ENCODE measurements at regions of chr2 and their contacts with region 1.

Region 1: DNA sequence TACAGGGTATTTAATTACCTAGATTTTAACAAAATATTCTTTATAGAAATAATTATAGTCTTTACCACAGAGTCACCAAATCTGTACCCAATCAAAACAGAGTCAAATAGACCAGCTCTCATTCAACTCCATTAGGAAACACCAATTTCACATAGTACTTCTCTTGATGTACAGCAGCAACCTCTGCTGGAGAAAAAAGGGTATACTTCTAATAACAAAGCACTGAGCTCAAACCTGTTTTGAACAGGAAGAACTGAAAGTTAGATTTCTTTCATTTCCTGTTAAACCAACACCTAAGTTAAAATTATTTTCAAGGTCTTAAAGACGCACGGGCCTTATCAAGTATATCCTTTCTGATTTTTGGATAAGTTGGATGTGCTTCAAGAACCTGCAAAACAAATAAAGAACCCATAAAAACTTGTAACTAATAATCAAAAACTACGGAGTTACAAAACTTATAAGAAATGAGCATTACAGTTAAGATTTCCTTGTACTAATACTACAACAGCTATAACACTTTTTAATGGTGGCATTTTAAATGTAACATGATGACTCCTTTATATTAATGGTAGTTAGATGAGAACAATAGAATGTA is 79.0 kb downstream of the TTC21B start:
- DNase-seq: peak; percentile 58
- CTCF ChIP-seq: peak; percentile 48

Region 2: DNA sequence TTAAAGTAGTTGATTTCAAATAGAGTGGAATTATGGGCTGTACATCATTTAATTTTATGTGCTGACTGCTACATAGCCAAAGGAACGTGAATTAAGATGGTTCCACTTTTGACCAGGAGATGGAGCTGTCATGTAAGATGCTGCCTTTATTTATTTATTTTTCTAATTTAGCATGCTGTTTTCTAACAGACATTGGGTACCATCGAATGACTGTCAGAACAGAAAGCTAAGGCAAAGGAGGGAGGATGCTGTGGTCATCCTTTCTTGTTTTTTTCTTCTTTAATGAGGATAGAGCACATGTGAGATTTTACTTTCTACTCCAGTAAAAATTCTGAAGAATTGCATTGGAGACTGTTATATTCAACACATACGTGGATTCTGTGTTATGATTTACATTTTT is 635.3 kb before region 1 on chr2 and contains the start of gene SCN2A:
- CTCF ChIA-PET with region 1: interaction called, 11 read pairs
- POLR2A ChIA-PET with region 1: no interaction called
- DNase-seq: peak; percentile 4
- CTCF ChIP-seq: peak; percentile 35

Region 3: GRCh38 chr2:165401285-165401852 is 473.2 kb before region 1 on chr2:
- CTCF ChIA-PET with region 1: interaction called, 34 read pairs
- POLR2A ChIA-PET with region 1: no interaction called
- DNase-seq: peak; percentile 20
- CTCF ChIP-seq: peak; percentile 68

Region 4: GRCh38 chr2:165645930-165646831 is 228.4 kb before region 1 on chr2:
- CTCF ChIA-PET with region 1: no interaction called
- POLR2A ChIA-PET with region 1: no interaction called
- DNase-seq: no peak
- CTCF ChIP-seq: no peak

Region 5: GRCh38 chr2:165863810-165864261 is 10.7 kb before region 1 on chr2:
- CTCF ChIA-PET with region 1: interaction called, 11 read pairs
- POLR2A ChIA-PET with region 1: no interaction called
- DNase-seq: no peak
- CTCF ChIP-seq: no peak

Region 6: GRCh38 chr2:165959371-165959770 is 84.8 kb after region 1 on chr2:
- CTCF ChIA-PET with region 1: no interaction called
- POLR2A ChIA-PET with region 1: no interaction called
- DNase-seq: no peak
- CTCF ChIP-seq: no peak